Dorsolateral prefrontal cortex (tissue), 120 donors: ENCODE measurements at regions of chr10 and their contacts with region 1.

Region 1: DNA sequence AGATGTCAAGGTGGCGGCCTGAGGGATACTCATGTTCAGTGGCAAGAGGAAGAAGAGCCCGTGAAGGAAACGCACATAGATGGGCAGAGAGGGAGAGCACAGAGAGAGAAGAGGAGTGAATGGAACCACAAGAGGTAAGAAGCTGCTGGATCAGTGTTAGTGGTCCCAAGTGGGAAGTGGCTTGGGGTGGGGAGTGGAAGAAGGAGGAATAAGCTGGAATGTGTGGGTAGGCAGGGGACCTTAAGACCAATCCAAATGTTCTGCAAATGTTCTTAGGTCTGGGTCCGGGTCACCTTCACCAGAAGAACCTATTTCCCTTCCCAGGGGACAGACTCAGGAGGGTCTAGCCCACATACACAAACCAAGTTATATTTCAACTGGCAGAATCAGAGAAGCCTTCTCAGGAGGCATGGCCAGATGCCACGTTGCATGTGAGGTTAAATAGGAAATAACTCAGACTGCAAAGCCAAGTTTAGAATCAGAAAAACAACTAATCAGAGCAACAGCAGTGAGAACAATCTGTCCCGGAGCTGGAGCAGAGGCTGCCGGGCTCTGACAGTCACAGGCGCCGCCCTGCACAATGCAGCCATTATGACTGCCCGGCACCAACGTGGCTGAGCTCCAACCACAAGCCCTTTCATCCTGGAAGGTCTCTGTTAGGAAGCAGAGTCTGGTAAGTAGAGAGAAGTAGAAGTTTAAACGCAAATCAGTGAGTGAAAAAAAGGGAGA is 78.6 kb upstream of the ARMC3 start:
- DNase-seq: peak; percentile 39 to 98 (median 94)
- H3K4me3 ChIP-seq: peak overlapping the region in 40 of 59 donors; percentile 0 to 55 (median 21)
- H3K27ac ChIP-seq: peak overlapping the region; percentile 85 to 100 (median 98)
- H3K27me3 ChIP-seq: peaks cover 0 to 2% (median 0%) of the 10 kb centered on the region in 45 donors
- CTCF ChIP-seq: peak in 15 of 56 donors; percentile 13 to 44 (median 24)

Region 2: GRCh38 chr10:22615819-22616499 is 233.3 kb before region 1 on chr10:
- intact Hi-C with region 1: loop called (anchors 5 kb)
- DNase-seq: peak; percentile 23 to 98 (median 91)
- H3K4me3 ChIP-seq: peak overlapping the region in 30 of 59 donors; percentile 1 to 44 (median 26)
- H3K27ac ChIP-seq: peak overlapping the region in 58 of 59 donors; percentile 60 to 98 (median 93)
- H3K27me3 ChIP-seq: no peaks in the 10 kb centered on the region
- CTCF ChIP-seq: peak in 5 of 56 donors; percentile 9 to 27 (median 21)

Region 3: GRCh38 chr10:22761569-22762220 is 87.5 kb before region 1 on chr10:
- intact Hi-C with region 1: loop called in 1 of 2 experiments (anchors 2 kb)
- DNase-seq: peak in 9 of 10 donors; percentile 49 to 84 (median 70)
- H3K4me3 ChIP-seq: no peak overlapping the region
- H3K27ac ChIP-seq: peak overlapping the region; percentile 36 to 99 (median 94)
- H3K27me3 ChIP-seq: no peaks in the 10 kb centered on the region
- CTCF ChIP-seq: peak in 10 of 56 donors; percentile 9 to 31 (median 19)

Region 4: DNA sequence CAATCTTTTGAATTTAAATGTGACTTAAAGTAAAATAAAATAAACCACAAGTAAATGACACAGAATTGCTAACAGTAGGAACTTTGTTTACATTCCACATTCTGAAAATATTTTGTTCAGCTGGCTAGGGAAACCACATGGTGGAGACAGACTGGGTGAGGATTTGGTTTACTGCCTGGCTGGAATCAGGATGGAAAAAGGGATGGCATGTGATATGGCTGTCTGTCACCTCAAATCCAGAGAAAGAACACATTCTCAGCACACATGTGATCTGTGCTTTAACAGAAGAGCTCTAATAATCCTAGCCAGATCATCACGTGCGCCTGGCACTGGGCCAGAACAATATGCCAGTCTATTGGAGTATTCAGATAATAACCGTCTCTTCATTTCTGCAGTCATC is 44.0 kb before region 1 on chr10:
- intact Hi-C with region 1: loop called in 1 of 2 experiments (anchors 1 kb)
- DNase-seq: peak in 9 of 10 donors; percentile 49 to 84 (median 65)
- H3K4me3 ChIP-seq: peak overlapping the region in 7 of 59 donors; percentile 0 to 35 (median 12)
- H3K27ac ChIP-seq: peak overlapping the region in 58 of 59 donors; percentile 19 to 95 (median 88)
- H3K27me3 ChIP-seq: no peaks in the 10 kb centered on the region
- CTCF ChIP-seq: peak in 29 of 56 donors; percentile 9 to 54 (median 29)

Region 5: DNA sequence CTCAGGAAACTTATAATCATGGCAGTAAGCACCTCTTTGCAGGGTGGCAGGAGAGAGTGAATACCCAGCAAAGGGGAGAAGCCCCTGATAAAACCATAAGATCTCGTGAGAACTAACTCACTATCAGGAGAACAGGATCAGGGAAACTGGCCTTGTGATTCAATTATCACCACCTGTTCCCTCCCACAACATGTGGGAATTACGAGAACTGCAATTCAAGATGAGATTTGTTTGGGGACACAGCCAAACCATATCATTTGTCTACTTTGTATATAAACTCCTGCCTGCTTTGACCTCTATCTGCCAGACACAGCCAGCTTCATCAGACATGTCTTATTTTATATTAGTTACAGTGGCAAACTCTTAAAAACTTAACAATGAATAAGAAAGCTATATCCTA is 129.0 kb after region 1 on chr10:
- intact Hi-C with region 1: loop called (anchors 2 to 10 kb)
- DNase-seq: no peak
- H3K4me3 ChIP-seq: no peak overlapping the region
- H3K27ac ChIP-seq: peak overlapping the region in 41 of 59 donors; percentile 2 to 85 (median 46)
- H3K27me3 ChIP-seq: no peaks in the 10 kb centered on the region
- CTCF ChIP-seq: peak in 1 of 56 donors; percentile 0